A673 (cell line): ENCODE measurements at regions of chr15 and their contacts with region 1.

Region 1: GRCh38 chr15:71518661-71519060 is 291.7 kb upstream of the NR2E3 start:
- DNase-seq: no peak
- H3K4me3 ChIP-seq: no peak overlapping the region
- H3K27ac ChIP-seq: no peak overlapping the region
- H3K4me1 ChIP-seq: no peaks in the 10 kb centered on the region
- H3K27me3 ChIP-seq: peaks cover 70% of the 10 kb centered on the region
- CTCF ChIP-seq: no peak

Region 2: GRCh38 chr15:71506946-71507345 is 11.7 kb before region 1 on chr15:
- CTCF ChIA-PET with region 1: no interaction called
- POLR2A ChIA-PET with region 1: no interaction called
- intact Hi-C with region 1: loop called (anchors 1 kb)
- DNase-seq: no peak
- H3K4me3 ChIP-seq: no peak overlapping the region
- H3K27ac ChIP-seq: no peak overlapping the region
- H3K4me1 ChIP-seq: no peaks in the 10 kb centered on the region
- H3K27me3 ChIP-seq: peaks cover 25% of the 10 kb centered on the region
- CTCF ChIP-seq: no peak

Region 3: DNA sequence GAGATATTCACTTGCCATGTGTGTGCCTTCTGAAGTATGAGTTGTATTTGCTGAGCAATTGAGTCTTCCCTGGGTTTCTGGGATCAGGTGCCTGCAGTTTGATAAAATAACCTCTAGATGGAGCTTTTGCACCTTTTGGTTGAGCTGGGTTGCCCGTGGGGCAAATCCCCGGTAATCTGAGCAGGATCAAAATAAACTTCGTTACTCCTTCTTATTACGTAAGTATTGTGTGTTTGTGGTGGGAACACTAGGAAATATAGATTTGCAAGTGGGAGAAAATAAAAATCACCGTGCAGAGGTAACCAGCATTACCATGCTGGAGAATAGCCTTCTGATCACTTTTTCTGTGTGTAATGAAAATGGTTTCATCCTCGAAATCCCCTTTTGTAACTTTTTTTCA is 14.3 kb after region 1 on chr15:
- CTCF ChIA-PET with region 1: no interaction called
- POLR2A ChIA-PET with region 1: no interaction called
- intact Hi-C with region 1: no loop called
- DNase-seq: peak; percentile 50
- H3K4me3 ChIP-seq: no peak overlapping the region
- H3K27ac ChIP-seq: no peak overlapping the region
- H3K4me1 ChIP-seq: no peaks in the 10 kb centered on the region
- H3K27me3 ChIP-seq: peaks cover 37% of the 10 kb centered on the region
- CTCF ChIP-seq: peak; percentile 80

Region 4: GRCh38 chr15:71611551-71612396 is 93.1 kb after region 1 on chr15:
- CTCF ChIA-PET with region 1: no interaction called
- POLR2A ChIA-PET with region 1: no interaction called
- intact Hi-C with region 1: no loop called
- DNase-seq: no peak
- H3K4me3 ChIP-seq: no peak overlapping the region
- H3K27ac ChIP-seq: no peak overlapping the region
- H3K4me1 ChIP-seq: no peaks in the 10 kb centered on the region
- H3K27me3 ChIP-seq: peaks cover 56% of the 10 kb centered on the region
- CTCF ChIP-seq: no peak

Region 5: DNA sequence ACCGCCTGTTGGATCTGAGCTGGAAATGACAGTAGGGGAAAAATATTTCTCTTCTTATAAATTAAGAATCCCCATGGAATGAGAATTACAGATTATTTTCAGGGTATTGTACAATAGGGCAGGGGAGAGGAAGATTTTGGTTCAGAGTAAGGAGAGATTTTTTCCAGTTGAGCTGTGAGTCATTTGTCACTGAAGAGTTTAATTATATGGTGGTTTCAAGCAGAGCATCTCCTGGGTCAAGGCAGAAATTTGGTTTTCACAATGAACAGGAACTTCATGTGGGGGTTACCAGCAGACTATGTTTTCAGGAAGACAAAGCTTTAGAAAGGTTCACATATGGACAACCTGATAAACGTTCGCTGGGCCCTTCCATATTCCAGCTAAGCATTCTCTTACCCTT is 108.9 kb after region 1 on chr15:
- CTCF ChIA-PET with region 1: no interaction called
- POLR2A ChIA-PET with region 1: no interaction called
- intact Hi-C with region 1: no loop called
- DNase-seq: no peak
- H3K4me3 ChIP-seq: no peak overlapping the region
- H3K27ac ChIP-seq: no peak overlapping the region
- H3K4me1 ChIP-seq: no peaks in the 10 kb centered on the region
- H3K27me3 ChIP-seq: peaks cover 93% of the 10 kb centered on the region
- CTCF ChIP-seq: no peak